ENCODE measurements at regions of chr20 and their contacts with region 1.

Region 1: GRCh38 chr20:37384683-37385174 is 38.8 kb downstream of the SRC start:
- DNase-seq: no peak
- ATAC-seq: peak; percentile 89
- H3K4me3 ChIP-seq: no peak overlapping the region
- H3K27ac ChIP-seq: peak overlapping the region; percentile 54
- H3K4me1 ChIP-seq: peaks cover 36% of the 10 kb centered on the region
- H3K27me3 ChIP-seq: no peaks in the 10 kb centered on the region
- CTCF ChIP-seq: peak; percentile 81 to 94 (median 87)
- EP300 ChIP-seq: no peak
- POLR2A ChIP-seq: no peak
- RAD21 ChIP-seq: peak; percentile 65

Region 2: DNA sequence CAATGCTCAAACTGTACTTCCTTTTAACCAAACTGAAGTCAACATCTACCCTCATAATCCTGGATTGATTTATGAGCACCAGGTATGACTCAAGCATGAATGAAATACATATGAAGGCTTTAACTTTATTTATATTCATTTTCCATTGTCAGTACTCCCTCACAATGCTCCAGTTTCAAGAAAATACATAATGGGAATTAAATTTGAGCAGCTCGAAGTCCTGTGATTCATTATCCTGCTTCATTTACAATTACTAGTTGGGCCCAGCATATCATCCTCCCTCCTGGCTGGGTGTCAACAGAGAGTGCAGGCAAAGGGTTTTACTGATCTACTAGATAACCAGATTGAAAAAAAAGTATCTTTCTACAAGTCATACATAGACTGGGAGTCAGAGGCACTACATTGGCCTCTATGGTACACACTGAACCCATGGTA is 443.3 kb before region 1 on chr20:
- CTCF ChIA-PET with region 1: no interaction called
- POLR2A ChIA-PET with region 1: no interaction called
- RAD21 ChIA-PET with region 1: no interaction called
- SMC1A ChIA-PET with region 1: no interaction called
- in situ Hi-C with region 1: no loop called
- intact Hi-C with region 1: no loop called
- DNase-seq: no peak
- ATAC-seq: no peak
- H3K4me3 ChIP-seq: no peak overlapping the region
- H3K27ac ChIP-seq: no peak overlapping the region
- H3K4me1 ChIP-seq: no peaks in the 10 kb centered on the region
- H3K27me3 ChIP-seq: no peaks in the 10 kb centered on the region
- CTCF ChIP-seq: no peak
- EP300 ChIP-seq: no peak
- POLR2A ChIP-seq: no peak
- RAD21 ChIP-seq: no peak

Region 3: GRCh38 chr20:37276494-37277252 is 108.1 kb before region 1 on chr20:
- CTCF ChIA-PET with region 1: interaction called, 34 read pairs
- POLR2A ChIA-PET with region 1: interaction called, 4 read pairs
- RAD21 ChIA-PET with region 1: interaction called, 28 read pairs
- SMC1A ChIA-PET with region 1: interaction called, 37 read pairs
- in situ Hi-C with region 1: loop called (anchors 5 kb)
- intact Hi-C with region 1: no loop called
- DNase-seq: no peak
- ATAC-seq: peak; percentile 94
- H3K4me3 ChIP-seq: no peak overlapping the region
- H3K27ac ChIP-seq: peak overlapping the region; percentile 78
- H3K4me1 ChIP-seq: peaks cover 42% of the 10 kb centered on the region
- H3K27me3 ChIP-seq: no peaks in the 10 kb centered on the region
- CTCF ChIP-seq: peak; percentile 30 to 69 (median 51); a peak in 4 of 6 replicates
- EP300 ChIP-seq: peak; percentile 27 to 40; a peak in 1 of 4 replicates
- POLR2A ChIP-seq: 0 out of 2 replicates have a peak, but pooled peaks have one; percentile 36
- RAD21 ChIP-seq: peak; percentile 75

Region 4: GRCh38 chr20:37288091-37288490 is 96.6 kb before region 1 on chr20:
- CTCF ChIA-PET with region 1: interaction called, 16 read pairs
- POLR2A ChIA-PET with region 1: interaction called, 6 read pairs
- RAD21 ChIA-PET with region 1: interaction called, 7 read pairs
- SMC1A ChIA-PET with region 1: interaction called, 4 read pairs
- in situ Hi-C with region 1: no loop called
- intact Hi-C with region 1: loop called (anchors 1 kb)
- DNase-seq: no peak
- ATAC-seq: no peak
- H3K4me3 ChIP-seq: no peak overlapping the region
- H3K27ac ChIP-seq: no peak overlapping the region
- H3K4me1 ChIP-seq: peaks cover 16% of the 10 kb centered on the region
- H3K27me3 ChIP-seq: no peaks in the 10 kb centered on the region
- CTCF ChIP-seq: no peak
- EP300 ChIP-seq: no peak
- POLR2A ChIP-seq: no peak
- RAD21 ChIP-seq: no peak

Region 5: GRCh38 chr20:37345339-37346230 is 39.1 kb before region 1 on chr20 and contains the start of gene SRC:
- CTCF ChIA-PET with region 1: interaction called, 14 read pairs
- POLR2A ChIA-PET with region 1: interaction called, 9 read pairs
- RAD21 ChIA-PET with region 1: interaction called, 6 read pairs
- SMC1A ChIA-PET with region 1: interaction called, 13 read pairs
- in situ Hi-C with region 1: no loop called
- intact Hi-C with region 1: no loop called
- DNase-seq: no peak
- ATAC-seq: peak; percentile 54
- H3K4me3 ChIP-seq: peak within 1 kb of the TSS; percentile 87
- H3K27ac ChIP-seq: peak within 1 kb of the TSS; percentile 90
- H3K4me1 ChIP-seq: peaks cover 29% of the 10 kb centered on the region
- H3K27me3 ChIP-seq: no peaks in the 10 kb centered on the region
- CTCF ChIP-seq: 0 out of 6 replicates have a peak, but pooled peaks of 1 of the 3 experiments have one; percentile 4
- EP300 ChIP-seq: no peak
- POLR2A ChIP-seq: peak; percentile 69
- RAD21 ChIP-seq: no peak
- polyA plus RNA-seq, gene SRC: 0.60 to 0.85 TPM

Region 6: DNA sequence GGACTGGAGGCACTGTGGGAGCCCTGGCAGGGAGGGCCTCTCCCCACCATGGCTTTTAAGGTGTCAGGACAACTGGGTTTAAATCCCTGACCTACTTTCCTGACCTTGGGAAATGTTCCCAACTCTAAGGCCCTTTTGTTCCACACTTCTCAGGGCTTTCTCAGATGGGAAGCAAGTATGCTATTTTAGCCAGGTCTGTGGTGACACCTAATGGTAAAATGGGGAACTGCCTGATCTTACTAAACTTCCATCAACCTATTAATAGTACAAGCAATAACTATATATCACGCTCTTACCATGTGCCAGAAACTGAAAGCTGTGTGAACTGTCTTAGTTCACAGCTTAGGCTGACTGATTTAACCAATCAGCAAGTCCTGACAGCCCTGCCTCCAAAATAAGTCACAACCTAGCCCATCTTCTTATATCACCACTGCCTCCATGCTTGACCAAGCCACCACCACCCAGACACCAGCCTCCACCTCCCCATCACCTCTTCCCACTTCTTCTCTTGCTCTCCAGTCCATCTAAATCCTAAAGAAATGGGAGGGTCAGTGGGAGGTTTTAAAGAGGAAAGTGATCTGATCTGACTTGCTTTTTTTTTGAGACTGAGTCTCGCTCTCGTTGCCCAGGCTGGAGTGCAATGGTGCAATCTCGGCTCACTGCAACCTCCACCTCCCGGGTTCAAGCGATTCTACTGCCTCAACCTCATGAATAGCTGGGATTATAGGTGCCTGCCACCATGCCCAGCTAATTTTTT is 149.8 kb after region 1 on chr20:
- CTCF ChIA-PET with region 1: interaction called, 8 read pairs
- POLR2A ChIA-PET with region 1: interaction called, 3 read pairs
- RAD21 ChIA-PET with region 1: interaction called, 4 read pairs
- SMC1A ChIA-PET with region 1: interaction called, 4 read pairs
- in situ Hi-C with region 1: no loop called
- intact Hi-C with region 1: loop called (anchors 1 kb)
- DNase-seq: peak; percentile 90
- ATAC-seq: peak; percentile 98
- H3K4me3 ChIP-seq: no peak overlapping the region
- H3K27ac ChIP-seq: peak overlapping the region; percentile 57
- H3K4me1 ChIP-seq: peaks cover 18% of the 10 kb centered on the region
- H3K27me3 ChIP-seq: no peaks in the 10 kb centered on the region
- CTCF ChIP-seq: peak; percentile 69 to 88 (median 77)
- EP300 ChIP-seq: peak; percentile 47 to 59; a peak in 2 of 4 replicates
- POLR2A ChIP-seq: no peak
- RAD21 ChIP-seq: peak; percentile 97